ENCODE measurements at regions of chr10 and their contacts with region 1.

Region 1: GRCh38 chr10:123132576-123133477 is 2.9 kb upstream of the HMX3 start:
- DNase-seq: peak; percentile 70 to 88
- H3K4me3 ChIP-seq: peak overlapping the region in 1 of 3 donors; percentile 44
- H3K27ac ChIP-seq: no peak overlapping the region
- H3K4me1 ChIP-seq: peaks cover 10 to 16% of the 10 kb centered on the region in 2 donors
- H3K27me3 ChIP-seq: peaks cover 21 to 98% of the 10 kb centered on the region in 2 donors
- CTCF ChIP-seq: peak; percentile 77 to 90 (median 78)
- POLR2A ChIP-seq: no peak

Region 2: DNA sequence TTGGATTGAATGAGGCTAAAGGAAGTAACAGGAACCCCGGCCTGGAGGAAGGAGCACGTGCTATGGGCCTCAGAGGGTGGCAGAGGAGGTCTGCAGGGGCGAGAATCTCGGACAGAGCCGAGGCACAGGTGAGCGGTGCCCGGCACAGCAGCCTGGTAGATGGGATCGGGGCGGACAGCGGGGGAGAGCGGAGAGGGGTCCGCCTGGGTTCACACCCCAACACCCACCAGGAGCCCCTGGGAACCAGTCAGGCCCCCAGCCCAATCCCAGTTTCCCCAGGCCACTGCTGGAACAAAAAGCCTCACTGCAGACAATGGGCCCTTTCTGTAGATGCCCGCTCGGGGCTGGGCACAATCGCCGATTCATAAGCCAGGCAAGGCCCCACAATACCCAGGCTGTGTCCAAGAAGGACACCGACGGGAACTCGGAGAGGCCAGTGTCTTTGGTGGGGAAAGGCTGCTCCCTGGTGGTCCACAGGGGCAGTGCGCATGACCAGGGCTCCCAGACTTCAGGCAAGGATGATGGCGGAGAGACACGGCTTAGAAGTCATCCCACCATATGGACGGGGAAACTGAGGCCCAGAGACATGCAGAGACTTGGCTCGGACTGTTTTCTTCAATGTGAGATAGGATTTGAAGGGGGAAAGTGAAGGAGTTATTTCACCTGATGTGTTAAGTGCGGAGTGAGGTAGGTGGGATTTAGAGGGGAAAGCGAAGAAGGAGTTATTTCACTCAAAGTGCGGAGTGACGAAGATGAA is 426.4 kb after region 1 on chr10:
- intact Hi-C with region 1: loop called (anchors 10 kb)
- DNase-seq: peak; percentile 54 to 76
- H3K4me3 ChIP-seq: no peak overlapping the region
- H3K27ac ChIP-seq: no peak overlapping the region
- H3K4me1 ChIP-seq: no peaks in the 10 kb centered on the region
- H3K27me3 ChIP-seq: peaks cover 0 to 20% of the 10 kb centered on the region in 2 donors
- CTCF ChIP-seq: peak; percentile 90 to 95 (median 95)
- POLR2A ChIP-seq: no peak

Region 3: DNA sequence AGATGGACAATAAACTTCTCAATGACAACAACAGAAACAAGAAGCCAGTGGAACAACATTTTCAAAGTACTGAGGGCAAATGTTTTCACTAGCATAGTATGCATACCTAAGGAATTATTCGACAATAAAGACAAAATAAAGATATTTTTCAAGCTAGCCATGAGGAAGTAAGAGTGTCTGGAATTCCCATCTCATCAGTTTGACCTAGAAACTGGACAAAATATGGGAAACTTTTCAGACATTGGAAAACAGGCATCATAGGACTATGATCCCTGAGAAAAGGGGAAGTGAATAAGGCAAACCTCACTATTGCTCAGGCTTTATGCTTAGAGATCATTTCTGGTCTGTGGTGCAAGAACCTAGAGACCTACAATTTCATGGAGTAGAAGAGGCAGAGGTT is 1199.6 kb after region 1 on chr10:
- intact Hi-C with region 1: no loop called
- DNase-seq: no peak
- H3K4me3 ChIP-seq: no peak overlapping the region
- H3K27ac ChIP-seq: no peak overlapping the region
- H3K4me1 ChIP-seq: no peaks in the 10 kb centered on the region
- H3K27me3 ChIP-seq: no peaks in the 10 kb centered on the region
- CTCF ChIP-seq: no peak
- POLR2A ChIP-seq: no peak

Measured in breast epithelium (tissue), 4 donors.